Activated B cell treated with CpG ODN at 0.5 μM for 24 hours (primary cell): ENCODE measurements at regions of chr12 and their contacts with region 1.

Region 1: DNA sequence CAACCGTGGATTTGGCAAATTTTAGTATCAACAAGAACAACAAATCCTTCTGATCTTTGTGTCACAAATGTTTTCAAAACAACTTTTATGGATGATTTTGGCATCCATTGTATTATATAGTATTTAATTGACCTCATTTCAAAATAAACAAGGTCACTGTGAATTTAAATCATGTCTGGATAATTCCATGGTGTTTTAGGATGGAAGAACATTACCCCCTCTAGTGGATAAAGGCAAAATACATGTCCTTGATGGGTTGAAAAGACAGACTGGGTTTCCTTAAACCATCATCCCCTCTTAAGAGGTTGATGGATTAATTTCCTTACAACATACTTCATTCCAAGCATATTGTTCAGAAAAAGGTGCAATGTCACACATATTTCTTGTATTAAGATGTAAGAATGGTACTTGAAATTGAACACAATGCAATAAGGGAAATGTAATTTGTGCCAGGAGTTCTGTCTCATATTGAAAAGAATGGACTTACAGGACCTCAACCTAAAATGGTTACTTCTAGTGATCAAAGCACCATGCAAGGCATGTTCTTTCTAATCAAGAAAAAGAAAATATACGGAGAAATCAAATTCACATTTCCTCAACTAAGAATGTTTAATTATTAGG is 352.0 kb downstream of the BCAT1 start:
- DNase-seq: no peak
- ATAC-seq: no peak
- H3K4me3 Mint-ChIP-seq: no peak overlapping the region
- H3K27ac Mint-ChIP-seq: no peak overlapping the region
- H3K4me1 Mint-ChIP-seq: peaks cover 42% of the 10 kb centered on the region
- H3K27me3 Mint-ChIP-seq: no peaks in the 10 kb centered on the region
- CTCF ChIP-seq: no peak

Region 2: DNA sequence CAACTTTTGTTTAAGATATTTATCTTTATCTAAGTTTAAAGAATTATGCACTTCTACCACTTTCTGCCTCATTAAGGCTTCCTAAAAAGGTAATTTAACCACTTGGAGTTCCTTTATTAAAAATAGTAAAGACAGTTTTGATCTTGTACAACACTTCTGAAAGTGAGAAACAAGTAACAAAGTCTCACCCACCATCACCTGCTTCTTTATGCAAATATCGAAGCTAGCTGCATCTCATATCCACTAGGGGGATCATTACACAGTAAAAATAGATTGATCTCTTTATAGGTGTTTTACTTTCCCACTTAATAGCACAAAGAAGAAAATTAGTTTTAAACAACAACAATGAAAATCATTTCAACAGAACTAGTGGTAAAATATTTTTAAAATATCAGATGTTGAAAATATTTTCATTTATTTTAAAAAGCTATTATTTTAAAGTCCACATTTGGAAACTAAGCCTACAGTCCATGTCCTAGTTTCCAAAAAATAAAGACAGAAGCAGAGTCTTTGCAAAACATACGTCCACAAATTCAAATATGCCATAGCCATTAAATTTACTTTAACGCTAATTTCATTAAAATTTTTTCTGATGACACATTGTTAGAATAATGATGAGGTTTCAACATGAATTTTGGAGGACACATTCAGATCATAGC is 487.4 kb before region 1 on chr12:
- CTCF ChIA-PET with region 1: no interaction called
- POLR2A ChIA-PET with region 1: no interaction called
- intact Hi-C with region 1: loop called (anchors 5 kb)
- DNase-seq: no peak
- ATAC-seq: peak; percentile 64
- H3K4me3 Mint-ChIP-seq: no peak overlapping the region
- H3K27ac Mint-ChIP-seq: no peak overlapping the region
- H3K4me1 Mint-ChIP-seq: peaks cover 5% of the 10 kb centered on the region
- H3K27me3 Mint-ChIP-seq: no peaks in the 10 kb centered on the region
- CTCF ChIP-seq: peak; percentile 36

Region 3: DNA sequence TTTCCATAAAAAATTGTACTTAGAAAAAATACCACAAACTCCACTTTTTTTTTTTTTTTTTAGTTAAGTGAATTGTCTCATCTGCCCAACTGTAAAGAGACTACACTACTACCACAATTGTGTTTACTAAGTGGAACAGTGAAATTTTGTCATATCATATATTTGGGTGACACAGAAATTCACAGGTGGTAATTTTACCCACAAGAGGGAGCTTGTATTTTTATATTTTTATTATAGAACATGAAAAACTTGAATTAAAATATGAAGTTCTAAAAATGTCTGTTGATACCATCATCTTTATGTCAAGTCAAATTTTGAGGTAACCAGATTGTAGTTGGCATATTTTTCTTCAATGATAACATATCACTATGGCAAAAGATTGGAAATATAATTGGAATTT is 318.0 kb before region 1 on chr12:
- CTCF ChIA-PET with region 1: no interaction called
- POLR2A ChIA-PET with region 1: no interaction called
- intact Hi-C with region 1: loop called (anchors 5 kb)
- DNase-seq: no peak
- ATAC-seq: no peak
- H3K4me3 Mint-ChIP-seq: no peak overlapping the region
- H3K27ac Mint-ChIP-seq: no peak overlapping the region
- H3K4me1 Mint-ChIP-seq: no peaks in the 10 kb centered on the region
- H3K27me3 Mint-ChIP-seq: no peaks in the 10 kb centered on the region
- CTCF ChIP-seq: no peak

Region 4: DNA sequence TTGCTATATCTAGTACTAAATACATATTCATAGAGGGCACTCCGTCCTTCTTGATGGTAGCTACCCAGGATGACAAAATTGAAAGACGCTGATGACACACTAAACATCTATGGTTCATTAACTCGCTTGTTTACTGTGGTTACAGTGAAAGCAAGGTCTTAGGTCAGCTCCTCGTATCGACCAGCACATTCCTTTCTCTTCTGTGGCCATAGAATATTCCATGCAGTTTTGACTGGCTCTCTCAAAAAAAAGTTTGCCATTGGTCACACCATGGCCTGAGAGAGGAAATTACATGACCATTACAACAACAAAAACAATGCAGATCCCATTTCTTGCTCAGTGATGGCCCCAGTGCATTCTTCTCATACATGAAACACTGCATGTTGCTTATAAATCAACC is 236.0 kb before region 1 on chr12:
- CTCF ChIA-PET with region 1: interaction called, 7 read pairs
- POLR2A ChIA-PET with region 1: interaction called, 4 read pairs
- intact Hi-C with region 1: loop called (anchors 2 kb)
- DNase-seq: no peak
- ATAC-seq: peak; percentile 53
- H3K4me3 Mint-ChIP-seq: peak overlapping the region; percentile 69
- H3K27ac Mint-ChIP-seq: peak overlapping the region; percentile 76
- H3K4me1 Mint-ChIP-seq: peaks cover 65% of the 10 kb centered on the region
- H3K27me3 Mint-ChIP-seq: no peaks in the 10 kb centered on the region
- CTCF ChIP-seq: no peak

Region 5: DNA sequence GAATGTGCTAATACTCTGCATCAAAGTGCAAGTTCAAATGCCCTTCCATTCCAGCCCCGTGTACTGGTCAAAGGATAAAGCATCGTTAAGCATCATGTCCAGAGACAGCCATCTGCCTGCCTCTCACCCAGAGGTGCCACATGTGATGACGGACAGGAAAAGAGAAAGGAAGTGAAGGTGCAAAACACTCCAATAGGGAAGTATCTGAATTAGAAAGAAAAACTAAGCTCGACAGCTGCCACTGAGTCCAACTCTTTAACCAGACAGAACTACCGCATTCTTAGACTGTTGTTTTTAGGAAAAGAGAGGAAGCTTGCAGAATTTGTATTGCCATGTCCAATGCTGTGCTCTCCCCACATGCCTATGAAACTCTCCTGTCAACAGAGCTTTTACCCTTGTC is 182.4 kb before region 1 on chr12:
- CTCF ChIA-PET with region 1: no interaction called
- POLR2A ChIA-PET with region 1: interaction called, 3 read pairs
- intact Hi-C with region 1: loop called (anchors 5 kb)
- DNase-seq: no peak
- ATAC-seq: peak; percentile 36
- H3K4me3 Mint-ChIP-seq: peak overlapping the region; percentile 80
- H3K27ac Mint-ChIP-seq: peak overlapping the region; percentile 89
- H3K4me1 Mint-ChIP-seq: peaks cover 61% of the 10 kb centered on the region
- H3K27me3 Mint-ChIP-seq: no peaks in the 10 kb centered on the region
- CTCF ChIP-seq: no peak

Region 6: DNA sequence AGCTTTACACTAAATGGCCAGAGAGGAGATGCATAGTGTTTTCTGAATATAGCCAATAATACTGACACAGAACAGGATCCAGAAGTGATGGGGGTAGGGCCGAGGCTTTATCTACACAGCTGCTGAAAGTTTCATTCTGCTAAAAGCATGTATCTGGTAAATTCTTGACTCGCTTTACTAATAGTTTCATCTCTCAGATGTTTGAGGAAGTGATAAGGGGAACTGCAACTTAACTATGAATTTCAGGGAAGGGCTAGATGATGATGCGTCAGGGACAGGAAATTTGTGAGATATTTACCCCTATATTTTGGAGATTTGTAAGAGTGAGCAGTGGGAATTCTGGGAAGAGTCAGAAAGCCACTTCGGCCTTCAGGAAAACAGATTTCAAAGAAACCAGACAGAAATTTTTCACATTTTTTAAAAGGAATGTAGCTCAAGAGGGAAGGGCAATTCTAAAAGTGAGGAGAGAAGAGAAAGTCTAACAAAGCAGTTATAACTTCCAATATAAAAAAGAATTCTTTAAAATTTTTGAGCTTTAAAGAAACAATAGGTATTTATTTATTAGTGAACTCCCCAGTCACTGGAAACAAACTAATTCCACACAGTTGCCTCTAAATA is 109.0 kb after region 1 on chr12:
- CTCF ChIA-PET with region 1: interaction called, 3 read pairs
- POLR2A ChIA-PET with region 1: interaction called, 8 read pairs
- intact Hi-C with region 1: loop called (anchors 2 kb)
- DNase-seq: no peak
- ATAC-seq: peak; percentile 91
- H3K4me3 Mint-ChIP-seq: peak overlapping the region; percentile 66
- H3K27ac Mint-ChIP-seq: peak overlapping the region; percentile 81
- H3K4me1 Mint-ChIP-seq: peaks cover 51% of the 10 kb centered on the region
- H3K27me3 Mint-ChIP-seq: no peaks in the 10 kb centered on the region
- CTCF ChIP-seq: no peak

Region 7: GRCh38 chr12:24719293-24719721 is 122.4 kb after region 1 on chr12:
- CTCF ChIA-PET with region 1: interaction called, 3 read pairs
- POLR2A ChIA-PET with region 1: interaction called, 14 read pairs
- intact Hi-C with region 1: loop called (anchors 2 kb)
- DNase-seq: no peak
- ATAC-seq: peak; percentile 94
- H3K4me3 Mint-ChIP-seq: peak overlapping the region; percentile 64
- H3K27ac Mint-ChIP-seq: peak overlapping the region; percentile 92
- H3K4me1 Mint-ChIP-seq: peaks cover 35% of the 10 kb centered on the region
- H3K27me3 Mint-ChIP-seq: no peaks in the 10 kb centered on the region
- CTCF ChIP-seq: no peak